ENCODE measurements at regions of chr16 and their contacts with region 1.

Region 1: GRCh38 chr16:87636072-87636684 is 33.9 kb downstream of the JPH3 start:
- DNase-seq: peak; percentile 66 to 91 (median 79)
- ATAC-seq: peak; percentile 85
- H3K4me3 ChIP-seq: peak overlapping the region; percentile 51
- H3K4me3 Mint-ChIP-seq: peak overlapping the region; percentile 89
- H3K27ac ChIP-seq: peak overlapping the region in 1 of 2 donors; percentile 50
- H3K27ac Mint-ChIP-seq: no peak overlapping the region
- H3K4me1 ChIP-seq: peaks cover 24% of the 10 kb centered on the region
- H3K4me1 Mint-ChIP-seq: peaks cover 11% of the 10 kb centered on the region
- H3K27me3 ChIP-seq: no peaks in the 10 kb centered on the region
- H3K27me3 Mint-ChIP-seq: peaks cover 9% of the 10 kb centered on the region
- CTCF ChIP-seq: peak; percentile 47

Region 2: GRCh38 chr16:87203060-87203656 is 433.0 kb before region 1 on chr16:
- CTCF ChIA-PET with region 1: interaction called, 3 read pairs
- POLR2A ChIA-PET with region 1: no interaction called
- intact Hi-C with region 1: loop called (anchors 2 to 5 kb)
- DNase-seq: peak in 8 of 14 experiments; percentile 8 to 51 (median 30)
- ATAC-seq: no peak
- H3K4me3 ChIP-seq: no peak overlapping the region
- H3K4me3 Mint-ChIP-seq: no peak overlapping the region
- H3K27ac ChIP-seq: no peak overlapping the region
- H3K27ac Mint-ChIP-seq: no peak overlapping the region
- H3K4me1 ChIP-seq: no peaks in the 10 kb centered on the region
- H3K4me1 Mint-ChIP-seq: no peaks in the 10 kb centered on the region
- H3K27me3 ChIP-seq: peaks cover 0 to 2% of the 10 kb centered on the region in 2 experiments
- H3K27me3 Mint-ChIP-seq: peaks cover 24% of the 10 kb centered on the region
- CTCF ChIP-seq: peak; percentile 28

Region 3: DNA sequence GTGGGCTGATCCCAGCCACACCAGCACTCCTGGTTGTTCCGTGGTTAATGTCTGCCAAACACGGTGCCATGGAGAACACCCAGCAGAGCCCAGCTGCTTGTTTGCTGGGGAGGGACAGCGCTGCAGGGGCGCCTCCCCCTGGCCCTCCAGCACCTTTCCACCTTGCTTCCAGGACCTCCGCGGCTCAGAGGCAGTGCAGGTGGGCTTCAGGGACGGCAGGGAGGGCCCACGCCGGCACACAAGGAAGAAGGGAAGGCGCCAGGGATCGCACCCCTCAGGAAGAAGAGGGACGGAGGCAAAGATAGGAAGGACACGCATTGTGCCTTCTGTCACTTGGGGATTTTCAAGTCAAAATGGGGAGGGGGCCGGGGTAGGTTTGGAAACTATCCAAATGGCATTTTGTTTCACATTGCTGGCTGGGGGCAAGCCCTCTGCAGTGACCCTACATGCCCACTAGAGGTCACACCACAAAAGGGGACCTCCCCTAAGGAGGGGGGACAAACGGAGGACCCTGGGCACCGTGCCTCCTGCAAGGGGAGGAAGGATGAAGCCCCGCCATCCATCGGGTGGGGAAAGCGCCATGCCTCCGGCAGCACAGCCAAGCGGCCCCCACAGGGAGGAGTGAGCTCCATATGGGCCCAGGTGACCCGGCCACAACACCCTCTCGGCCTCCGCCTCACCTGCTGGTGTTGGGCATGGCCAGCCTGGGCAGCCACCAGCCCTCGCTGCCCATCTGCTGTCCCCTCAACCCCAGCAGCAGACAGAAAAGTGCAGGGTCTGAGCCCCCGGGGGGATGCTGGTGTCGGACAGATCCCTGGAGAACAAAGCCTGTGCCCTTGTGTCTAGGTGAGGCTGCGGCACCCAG is 311.5 kb before region 1 on chr16:
- CTCF ChIA-PET with region 1: interaction called, 3 read pairs
- POLR2A ChIA-PET with region 1: no interaction called
- intact Hi-C with region 1: loop called (anchors 2 to 5 kb)
- DNase-seq: peak; percentile 20 to 73 (median 39)
- ATAC-seq: peak; percentile 96
- H3K4me3 ChIP-seq: no peak overlapping the region
- H3K4me3 Mint-ChIP-seq: no peak overlapping the region
- H3K27ac ChIP-seq: no peak overlapping the region
- H3K27ac Mint-ChIP-seq: no peak overlapping the region
- H3K4me1 ChIP-seq: peaks cover 6% of the 10 kb centered on the region
- H3K4me1 Mint-ChIP-seq: no peaks in the 10 kb centered on the region
- H3K27me3 ChIP-seq: no peaks in the 10 kb centered on the region
- H3K27me3 Mint-ChIP-seq: no peaks in the 10 kb centered on the region
- CTCF ChIP-seq: peak; percentile 87

Region 4: GRCh38 chr16:87363771-87364455 is 272.3 kb before region 1 on chr16:
- CTCF ChIA-PET with region 1: no interaction called
- POLR2A ChIA-PET with region 1: no interaction called
- intact Hi-C with region 1: no loop called
- DNase-seq: no peak
- ATAC-seq: no peak
- H3K4me3 ChIP-seq: no peak overlapping the region
- H3K4me3 Mint-ChIP-seq: no peak overlapping the region
- H3K27ac ChIP-seq: no peak overlapping the region
- H3K27ac Mint-ChIP-seq: no peak overlapping the region
- H3K4me1 ChIP-seq: peaks cover 15% of the 10 kb centered on the region
- H3K4me1 Mint-ChIP-seq: peaks cover 28% of the 10 kb centered on the region
- H3K27me3 ChIP-seq: no peaks in the 10 kb centered on the region
- H3K27me3 Mint-ChIP-seq: no peaks in the 10 kb centered on the region
- CTCF ChIP-seq: no peak

Region 5: GRCh38 chr16:87416826-87417527 is 219.2 kb before region 1 on chr16:
- CTCF ChIA-PET with region 1: interaction called, 17 read pairs
- POLR2A ChIA-PET with region 1: interaction called, 4 read pairs
- intact Hi-C with region 1: loop called (anchors 1 kb)
- DNase-seq: peak in 9 of 14 experiments; percentile 13 to 57 (median 30)
- ATAC-seq: no peak
- H3K4me3 ChIP-seq: no peak overlapping the region
- H3K4me3 Mint-ChIP-seq: no peak overlapping the region
- H3K27ac ChIP-seq: no peak overlapping the region
- H3K27ac Mint-ChIP-seq: no peak overlapping the region
- H3K4me1 ChIP-seq: no peaks in the 10 kb centered on the region
- H3K4me1 Mint-ChIP-seq: no peaks in the 10 kb centered on the region
- H3K27me3 ChIP-seq: no peaks in the 10 kb centered on the region
- H3K27me3 Mint-ChIP-seq: no peaks in the 10 kb centered on the region
- CTCF ChIP-seq: peak; percentile 53

Region 6: GRCh38 chr16:87550496-87550961 is 85.6 kb before region 1 on chr16:
- CTCF ChIA-PET with region 1: interaction called, 7 read pairs
- POLR2A ChIA-PET with region 1: no interaction called
- intact Hi-C with region 1: loop called in 1 of 2 experiments (anchors 1 kb)
- DNase-seq: peak; percentile 39 to 75 (median 55)
- ATAC-seq: peak; percentile 41
- H3K4me3 ChIP-seq: no peak overlapping the region
- H3K4me3 Mint-ChIP-seq: no peak overlapping the region
- H3K27ac ChIP-seq: no peak overlapping the region
- H3K27ac Mint-ChIP-seq: no peak overlapping the region
- H3K4me1 ChIP-seq: no peaks in the 10 kb centered on the region
- H3K4me1 Mint-ChIP-seq: no peaks in the 10 kb centered on the region
- H3K27me3 ChIP-seq: no peaks in the 10 kb centered on the region
- H3K27me3 Mint-ChIP-seq: peaks cover 39% of the 10 kb centered on the region
- CTCF ChIP-seq: peak; percentile 97

Region 7: DNA sequence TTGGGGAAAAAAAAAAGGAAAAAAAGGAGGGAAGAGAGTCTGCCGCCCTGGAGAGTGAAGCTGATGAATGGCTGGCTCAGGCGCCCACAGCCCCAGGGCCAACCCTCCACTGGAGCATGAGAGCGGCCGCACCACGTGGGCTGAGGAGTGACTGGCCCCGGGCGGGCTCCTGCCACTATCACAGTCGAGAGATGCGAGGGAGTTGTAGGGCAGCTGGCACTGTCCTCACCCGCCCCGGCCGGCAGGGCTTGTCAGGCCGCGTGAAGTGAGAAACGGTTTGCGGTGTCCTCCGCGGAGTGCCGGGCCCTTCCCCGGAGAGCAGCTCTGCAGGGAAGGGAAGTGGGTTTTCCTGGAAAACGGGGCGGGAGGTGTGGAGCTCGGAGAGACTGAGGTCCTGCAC is 12.1 kb after region 1 on chr16:
- CTCF ChIA-PET with region 1: no interaction called
- POLR2A ChIA-PET with region 1: no interaction called
- intact Hi-C with region 1: no loop called
- DNase-seq: no peak
- ATAC-seq: no peak
- H3K4me3 ChIP-seq: no peak overlapping the region
- H3K4me3 Mint-ChIP-seq: no peak overlapping the region
- H3K27ac ChIP-seq: no peak overlapping the region
- H3K27ac Mint-ChIP-seq: no peak overlapping the region
- H3K4me1 ChIP-seq: no peaks in the 10 kb centered on the region
- H3K4me1 Mint-ChIP-seq: no peaks in the 10 kb centered on the region
- H3K27me3 ChIP-seq: no peaks in the 10 kb centered on the region
- H3K27me3 Mint-ChIP-seq: no peaks in the 10 kb centered on the region
- CTCF ChIP-seq: no peak

Region 8: GRCh38 chr16:87671221-87671620 is 35.0 kb after region 1 on chr16:
- CTCF ChIA-PET with region 1: no interaction called
- POLR2A ChIA-PET with region 1: no interaction called
- intact Hi-C with region 1: no loop called
- DNase-seq: no peak
- ATAC-seq: no peak
- H3K4me3 ChIP-seq: no peak overlapping the region
- H3K4me3 Mint-ChIP-seq: no peak overlapping the region
- H3K27ac ChIP-seq: no peak overlapping the region
- H3K27ac Mint-ChIP-seq: no peak overlapping the region
- H3K4me1 ChIP-seq: no peaks in the 10 kb centered on the region
- H3K4me1 Mint-ChIP-seq: no peaks in the 10 kb centered on the region
- H3K27me3 ChIP-seq: peaks cover 0 to 4% of the 10 kb centered on the region in 2 experiments
- H3K27me3 Mint-ChIP-seq: no peaks in the 10 kb centered on the region
- CTCF ChIP-seq: no peak

Region 9: DNA sequence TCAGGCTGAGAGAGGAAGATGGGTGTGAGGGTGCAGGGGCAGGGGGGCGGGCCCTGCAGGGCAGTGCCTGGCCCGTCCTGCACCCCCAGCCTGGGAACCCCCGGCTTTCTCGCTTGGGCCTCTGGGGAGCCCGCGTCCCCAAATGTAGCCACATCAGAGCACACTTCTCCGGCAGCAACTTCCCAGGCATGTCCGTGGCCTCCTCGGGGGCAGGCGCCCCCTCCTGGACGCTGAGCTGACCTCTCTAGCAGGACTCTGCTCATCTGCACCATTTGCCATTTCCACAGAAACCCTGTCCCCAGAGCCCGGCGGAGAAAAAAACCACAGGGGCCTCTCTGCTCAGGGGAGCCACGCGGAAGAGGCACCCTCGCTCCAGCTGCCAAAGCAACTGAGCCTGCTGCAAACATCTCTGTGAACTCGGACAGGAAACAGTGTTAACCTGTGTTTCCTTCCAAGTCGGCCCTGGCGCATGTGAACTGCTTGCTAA is 66.2 kb after region 1 on chr16:
- CTCF ChIA-PET with region 1: no interaction called
- POLR2A ChIA-PET with region 1: no interaction called
- intact Hi-C with region 1: no loop called
- DNase-seq: peak in 11 of 14 experiments; percentile 15 to 64 (median 40)
- ATAC-seq: peak; percentile 60
- H3K4me3 ChIP-seq: no peak overlapping the region
- H3K4me3 Mint-ChIP-seq: peak overlapping the region; percentile 74
- H3K27ac ChIP-seq: peak overlapping the region; percentile 40 to 41
- H3K27ac Mint-ChIP-seq: peak overlapping the region; percentile 85
- H3K4me1 ChIP-seq: peaks cover 53% of the 10 kb centered on the region
- H3K4me1 Mint-ChIP-seq: peaks cover 54% of the 10 kb centered on the region
- H3K27me3 ChIP-seq: no peaks in the 10 kb centered on the region
- H3K27me3 Mint-ChIP-seq: no peaks in the 10 kb centered on the region
- CTCF ChIP-seq: peak; percentile 35

Measured in CD4-positive, alpha-beta T cell (primary cell).